Posterior vena cava (tissue), 2 donors: ENCODE measurements at regions of chr7 and their contacts with region 1.

Region 1: GRCh38 chr7:31651869-31652268 is 35.1 kb upstream of the PPP1R17 start:
- DNase-seq: no peak

Region 2: DNA sequence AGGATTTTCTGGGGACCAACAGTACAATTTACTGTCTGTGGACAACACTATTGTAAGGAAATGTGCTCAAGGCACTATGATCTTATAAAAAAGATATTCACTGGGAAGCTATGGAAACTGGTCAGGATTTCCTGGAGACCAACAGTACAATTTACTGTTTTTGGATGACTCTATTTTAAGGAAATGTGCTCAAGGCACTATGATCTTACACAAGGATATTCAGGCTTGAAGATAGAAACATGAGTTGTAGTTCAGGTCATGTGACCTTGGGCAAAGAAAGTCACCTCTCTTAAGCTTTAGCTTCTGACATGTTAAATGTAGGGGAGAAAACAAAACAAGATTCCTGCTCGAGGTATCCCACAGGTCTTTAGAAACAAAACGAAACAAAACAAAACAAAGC is 139.7 kb before region 1 on chr7:
- intact Hi-C with region 1: no loop called
- DNase-seq: no peak

Region 3: GRCh38 chr7:31633894-31634494 is 17.9 kb before region 1 on chr7:
- intact Hi-C with region 1: no loop called
- DNase-seq: no peak

Region 4: GRCh38 chr7:32381024-32381601 is 729.2 kb after region 1 on chr7:
- intact Hi-C with region 1: loop called in 1 of 2 experiments (anchors 10 kb)
- DNase-seq: no peak